H1 (cell line): ENCODE measurements at regions of chr16 and their contacts with region 1.

Region 1: GRCh38 chr16:29877266-29877961 is 14.4 kb upstream of the CDIPT start:
- DNase-seq: peak; percentile 99
- H3K4me3 ChIP-seq: peak overlapping the region; percentile 41 to 64 (median 52)
- H3K27ac ChIP-seq: peak overlapping the region; percentile 42; the same call in 1 of the 2 replicates
- H3K4me1 ChIP-seq: peaks cover 0 to 11% (median 7%) of the 10 kb centered on the region in 4 experiments; a peak in 5 of 7 replicates
- H3K27me3 ChIP-seq: no peaks in the 10 kb centered on the region
- CTCF ChIP-seq: no peak
- EP300 ChIP-seq: no peak
- POLR2A ChIP-seq: peak in 1 of 2 experiments; percentile 65; a peak in 2 of 3 replicates
- RAD21 ChIP-seq: no peak

Region 2: DNA sequence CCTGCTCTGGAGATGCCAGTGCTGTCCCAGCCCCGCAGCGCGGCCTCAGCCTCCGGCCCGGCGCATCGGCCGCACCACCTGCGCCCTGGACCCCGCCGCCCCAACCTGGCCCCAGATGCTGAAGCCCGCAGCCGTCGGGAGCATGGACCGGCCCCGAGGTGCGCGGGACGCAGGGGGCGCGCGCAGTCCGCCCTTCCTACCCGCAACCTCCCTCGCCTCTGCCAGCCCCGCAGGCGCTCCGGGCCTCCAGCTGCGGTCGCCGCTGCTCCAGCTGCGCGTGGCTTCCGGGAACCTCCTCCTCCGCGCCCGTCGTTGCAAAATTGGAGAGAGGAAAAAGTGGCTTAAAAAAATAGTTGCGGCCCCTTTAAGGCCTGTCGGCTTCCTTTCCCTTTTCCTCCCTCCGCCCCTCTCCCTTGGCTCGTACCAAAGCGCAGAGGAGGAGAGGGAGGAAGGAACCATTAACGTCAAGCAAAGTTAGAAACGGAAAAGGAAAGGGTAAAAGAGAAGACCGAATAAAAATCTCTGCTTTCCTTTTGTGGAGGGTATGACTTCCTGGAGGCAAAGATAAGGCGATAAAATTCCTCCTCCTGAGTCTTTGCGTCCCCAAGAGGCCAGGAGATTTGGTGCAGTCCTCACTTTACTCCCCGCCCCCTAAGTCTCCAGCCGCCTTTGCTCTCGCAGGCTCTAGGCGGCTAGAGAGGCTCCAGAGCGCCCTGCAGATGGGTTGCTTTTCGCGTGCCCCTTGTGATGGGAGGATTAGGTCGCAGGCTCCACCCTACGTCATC is 14.3 kb before region 1 on chr16 and contains the start of gene CDIPT:
- CTCF ChIA-PET with region 1: interaction called, 10 read pairs
- POLR2A ChIA-PET with region 1: interaction called, 6 read pairs
- DNase-seq: peak; percentile 91 to 93
- H3K4me3 ChIP-seq: peak within 1 kb of the TSS; percentile 82 to 90 (median 90)
- H3K27ac ChIP-seq: peak within 1 kb of the TSS; percentile 99
- H3K4me1 ChIP-seq: peaks cover 0 to 7% (median 3%) of the 10 kb centered on the region in 4 experiments; a peak in 3 of 7 replicates
- H3K27me3 ChIP-seq: no peaks in the 10 kb centered on the region
- CTCF ChIP-seq: peak; percentile 73 to 94 (median 78)
- EP300 ChIP-seq: peak in 1 of 2 experiments; percentile 99; a peak in 2 of 3 replicates
- POLR2A ChIP-seq: peak in 1 of 2 experiments; percentile 55; a peak in 1 of 3 replicates
- RAD21 ChIP-seq: peak in 1 of 2 experiments; percentile 23; a peak in 2 of 4 replicates
- total RNA-seq, gene CDIPT: 69.2 and 70.9 TPM in 2 replicates

Region 3: DNA sequence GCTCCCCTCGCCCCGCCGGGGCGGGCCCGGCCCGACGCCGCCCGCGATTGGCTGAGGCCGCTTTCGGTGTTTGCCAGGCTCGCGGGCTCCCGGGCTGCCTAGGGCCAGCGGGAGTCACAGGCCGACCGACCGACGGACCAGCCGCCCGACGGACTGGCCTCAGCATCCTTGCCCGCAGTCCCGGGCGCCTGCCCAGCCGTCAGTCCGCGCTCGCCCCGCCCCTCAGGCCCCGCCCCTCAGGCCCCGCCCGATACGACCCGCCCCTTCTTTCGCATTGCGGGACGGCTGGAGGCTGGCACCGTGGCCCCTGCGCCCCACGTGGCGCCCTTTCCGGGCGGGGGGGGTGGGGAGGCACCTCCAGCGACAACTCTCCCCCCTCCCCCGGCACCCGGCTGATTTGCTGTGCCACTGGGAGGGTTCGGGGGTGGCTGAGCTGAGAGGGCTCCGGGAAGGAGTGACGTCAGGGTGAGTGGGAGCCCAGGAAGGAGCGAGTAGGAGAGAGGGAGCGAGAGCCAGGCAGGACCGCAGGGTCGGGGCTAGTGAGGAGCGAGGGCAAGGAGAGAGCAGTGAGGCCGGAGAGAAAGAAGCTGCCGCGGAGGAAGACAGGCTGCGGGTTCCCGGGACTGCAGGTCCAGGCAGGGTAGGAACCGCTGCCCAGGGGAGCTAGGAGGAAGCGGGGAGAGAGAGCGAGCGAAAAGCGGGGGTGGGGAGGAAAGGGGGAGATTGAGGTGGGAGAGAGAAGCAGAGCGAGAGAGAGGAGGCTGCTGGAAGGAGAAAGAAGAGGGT is 22.9 kb after region 1 on chr16 and contains the start of gene ASPHD1:
- CTCF ChIA-PET with region 1: interaction called, 6 read pairs
- POLR2A ChIA-PET with region 1: interaction called, 15 read pairs
- DNase-seq: peak; percentile 25 to 89
- H3K4me3 ChIP-seq: peak within 1 kb of the TSS; percentile 59 to 99 (median 90)
- H3K27ac ChIP-seq: peak within 1 kb of the TSS; percentile 67
- H3K4me1 ChIP-seq: peaks cover 0 to 14% (median 3%) of the 10 kb centered on the region in 4 experiments; a peak in 6 of 7 replicates
- H3K27me3 ChIP-seq: no peaks in the 10 kb centered on the region
- CTCF ChIP-seq: no peak
- EP300 ChIP-seq: no peak
- POLR2A ChIP-seq: no peak
- RAD21 ChIP-seq: no peak
- total RNA-seq, gene ASPHD1: 17.8 and 18.6 TPM in 2 replicates